Activated T-helper 1 cell treated with anti-CD3 and anti-CD28 coated beads, Interleukin-12 subunit alpha, Interleukin-12 subunit beta, Interleukin-2, Interleukin-4 antibody, amounts not matched to agents 30 ng/mL and 10 ng/mL and 1 ng/mL, durations not matched to agents 14 hours and 24 hours and 36 hours (primary cell): ENCODE measurements at regions of chr6 and their contacts with region 1.

Region 1: DNA sequence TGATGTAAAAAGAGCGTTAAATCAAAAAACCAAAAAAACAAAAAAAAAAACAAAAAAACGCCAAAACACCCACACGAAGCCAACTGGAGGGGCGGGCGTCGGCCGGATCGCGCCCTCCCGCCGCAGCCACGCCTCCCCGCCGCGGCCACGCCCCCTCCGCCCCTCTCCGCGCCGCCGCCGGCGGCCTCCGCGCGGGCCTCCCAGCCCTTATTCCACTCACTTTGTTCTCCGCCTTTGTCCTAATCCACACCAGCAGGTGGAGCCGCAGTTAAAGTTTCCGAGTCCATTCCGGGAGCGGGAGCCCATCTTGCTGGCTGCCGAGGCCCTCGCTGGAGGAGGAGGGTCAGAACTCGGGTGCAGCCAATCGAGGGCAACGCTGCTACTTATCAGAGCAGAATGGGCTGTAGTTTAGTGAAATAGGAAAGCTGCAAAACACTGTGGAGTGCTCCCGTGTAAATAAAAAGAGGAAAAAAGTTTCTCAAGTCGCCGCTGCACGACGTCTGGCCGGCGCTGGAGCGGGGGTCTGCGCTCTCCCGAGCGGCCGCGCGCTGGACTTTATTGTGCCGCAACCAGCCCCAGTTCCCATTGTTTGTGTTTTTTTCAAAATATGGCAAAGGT is at the start of gene ASF1A:
- DNase-seq: peak; percentile 95
- H3K4me3 Mint-ChIP-seq: peak within 1 kb of the TSS; percentile 94
- H3K27ac Mint-ChIP-seq: peak within 1 kb of the TSS; percentile 96
- H3K4me1 Mint-ChIP-seq: peaks cover 49% of the 10 kb centered on the region
- H3K27me3 Mint-ChIP-seq: no peaks in the 10 kb centered on the region
- total RNA-seq, gene ASF1A: 36.0 and 42.9 TPM in 2 replicates

Region 2: GRCh38 chr6:117674991-117675657 is 1218.8 kb before region 1 on chr6 and contains the start of gene NUS1:
- intact Hi-C with region 1: loop called (anchors 5 kb)
- DNase-seq: peak; percentile 97
- H3K4me3 Mint-ChIP-seq: peak within 1 kb of the TSS; percentile 96
- H3K27ac Mint-ChIP-seq: peak within 1 kb of the TSS; percentile 87
- H3K4me1 Mint-ChIP-seq: peaks cover 49% of the 10 kb centered on the region
- H3K27me3 Mint-ChIP-seq: no peaks in the 10 kb centered on the region
- total RNA-seq, gene NUS1: 49.5 and 52.1 TPM in 2 replicates

Region 3: DNA sequence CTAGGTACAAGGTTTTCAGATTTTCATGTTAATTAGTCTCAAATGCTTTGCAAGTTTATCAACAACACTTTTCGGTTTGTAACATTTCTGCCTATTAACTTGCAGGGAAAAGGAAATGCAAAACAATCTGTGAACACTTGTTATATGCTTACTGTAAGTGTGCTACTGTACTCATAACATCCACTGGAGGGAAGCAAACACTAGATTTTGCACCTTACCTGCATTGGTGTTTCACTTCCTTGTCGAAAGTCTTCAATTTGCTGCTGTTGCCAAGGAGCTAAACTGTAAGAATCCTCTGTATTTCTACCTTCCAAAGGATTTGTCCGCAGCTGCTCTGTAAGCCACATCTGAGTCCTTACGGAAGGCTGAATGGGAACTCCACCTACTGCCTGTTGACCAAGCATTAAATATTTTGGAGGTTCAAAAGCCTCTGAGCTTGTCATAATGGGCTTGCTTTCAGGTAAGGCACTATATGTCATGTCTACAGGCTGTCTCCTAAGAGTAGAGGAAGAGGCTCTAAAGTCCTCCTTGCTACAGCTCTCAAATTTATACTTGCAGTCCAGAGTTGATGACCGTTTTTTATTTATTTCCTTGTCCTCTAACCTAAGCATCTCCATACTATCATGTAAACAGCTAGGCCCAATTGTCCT is 328.5 kb before region 1 on chr6:
- intact Hi-C with region 1: loop called (anchors 2 kb)
- DNase-seq: no peak
- H3K4me3 Mint-ChIP-seq: no peak overlapping the region
- H3K27ac Mint-ChIP-seq: peak overlapping the region; percentile 9
- H3K4me1 Mint-ChIP-seq: peaks cover 34% of the 10 kb centered on the region
- H3K27me3 Mint-ChIP-seq: no peaks in the 10 kb centered on the region

Region 4: GRCh38 chr6:118709859-118710350 is 184.0 kb before region 1 on chr6:
- intact Hi-C with region 1: loop called (anchors 1 kb)
- DNase-seq: peak; percentile 77
- H3K4me3 Mint-ChIP-seq: peak overlapping the region; percentile 96
- H3K27ac Mint-ChIP-seq: peak overlapping the region; percentile 99
- H3K4me1 Mint-ChIP-seq: peaks cover 94% of the 10 kb centered on the region
- H3K27me3 Mint-ChIP-seq: peaks cover under 1% of the 10 kb centered on the region

Region 5: DNA sequence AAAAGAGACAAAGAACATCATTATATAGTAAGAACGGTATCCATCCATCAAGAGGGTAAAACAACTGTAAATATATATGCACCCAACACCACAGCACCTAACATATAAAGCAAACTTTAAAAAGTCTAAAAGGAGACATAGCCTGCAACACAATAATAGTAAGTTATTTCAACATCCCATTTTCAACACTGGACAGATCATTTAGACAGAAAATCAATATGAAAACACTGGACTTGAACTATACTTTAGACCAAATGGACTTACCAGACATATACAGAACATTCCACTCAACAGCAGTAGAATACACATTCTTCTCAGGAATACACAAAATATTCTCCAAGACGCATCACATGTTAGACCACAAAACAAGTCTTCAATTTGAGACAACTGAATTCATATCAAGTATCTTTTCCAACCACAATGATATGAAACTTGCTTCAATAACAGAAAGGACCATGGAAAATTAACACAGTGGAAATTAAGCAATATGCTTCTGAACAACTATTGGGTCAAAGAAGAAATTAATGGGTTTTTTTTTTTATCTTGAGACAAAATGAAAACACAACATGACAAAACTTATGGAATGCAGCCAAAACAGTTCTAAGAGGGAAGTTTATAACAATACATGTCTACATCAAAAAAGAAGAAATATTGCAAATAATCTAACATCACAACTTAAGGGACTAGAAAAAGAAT is 23.9 kb before region 1 on chr6:
- intact Hi-C with region 1: loop called (anchors 2 kb)
- DNase-seq: no peak
- H3K4me3 Mint-ChIP-seq: no peak overlapping the region
- H3K27ac Mint-ChIP-seq: peak overlapping the region; percentile 65
- H3K4me1 Mint-ChIP-seq: peaks cover 24% of the 10 kb centered on the region
- H3K27me3 Mint-ChIP-seq: no peaks in the 10 kb centered on the region

Region 6: GRCh38 chr6:119078376-119079282 is 184.7 kb after region 1 on chr6 and contains the start of gene FAM184A:
- intact Hi-C with region 1: loop called (anchors 1 kb)
- DNase-seq: peak; percentile 73
- H3K4me3 Mint-ChIP-seq: peak within 1 kb of the TSS; percentile 92
- H3K27ac Mint-ChIP-seq: peak within 1 kb of the TSS; percentile 91
- H3K4me1 Mint-ChIP-seq: peaks cover 43% of the 10 kb centered on the region
- H3K27me3 Mint-ChIP-seq: peaks cover 8% of the 10 kb centered on the region
- total RNA-seq, gene FAM184A: 9.0 and 9.4 TPM in 2 replicates

Region 7: GRCh38 chr6:119313937-119314884 is 420.3 kb after region 1 on chr6:
- intact Hi-C with region 1: loop called (anchors 10 kb)
- DNase-seq: peak; percentile 45
- H3K4me3 Mint-ChIP-seq: peak overlapping the region; percentile 73
- H3K27ac Mint-ChIP-seq: peak overlapping the region; percentile 99
- H3K4me1 Mint-ChIP-seq: peaks cover 76% of the 10 kb centered on the region
- H3K27me3 Mint-ChIP-seq: no peaks in the 10 kb centered on the region